ENCODE measurements at regions of chr12 and their contacts with region 1.

Region 1: GRCh38 chr12:113299619-113300237 is 35.2 kb downstream of the SLC8B1 start:
- DNase-seq: peak; percentile 23 to 71
- ATAC-seq: peak; percentile 57
- H3K4me3 ChIP-seq: no peak overlapping the region
- H3K27ac ChIP-seq: peak overlapping the region; percentile 76 to 89 (median 80)
- H3K4me1 ChIP-seq: peaks cover 27 to 30% of the 10 kb centered on the region in 2 donors
- H3K27me3 ChIP-seq: no peaks in the 10 kb centered on the region
- CTCF ChIP-seq: no peak
- POLR2A ChIP-seq: no peak

Region 2: DNA sequence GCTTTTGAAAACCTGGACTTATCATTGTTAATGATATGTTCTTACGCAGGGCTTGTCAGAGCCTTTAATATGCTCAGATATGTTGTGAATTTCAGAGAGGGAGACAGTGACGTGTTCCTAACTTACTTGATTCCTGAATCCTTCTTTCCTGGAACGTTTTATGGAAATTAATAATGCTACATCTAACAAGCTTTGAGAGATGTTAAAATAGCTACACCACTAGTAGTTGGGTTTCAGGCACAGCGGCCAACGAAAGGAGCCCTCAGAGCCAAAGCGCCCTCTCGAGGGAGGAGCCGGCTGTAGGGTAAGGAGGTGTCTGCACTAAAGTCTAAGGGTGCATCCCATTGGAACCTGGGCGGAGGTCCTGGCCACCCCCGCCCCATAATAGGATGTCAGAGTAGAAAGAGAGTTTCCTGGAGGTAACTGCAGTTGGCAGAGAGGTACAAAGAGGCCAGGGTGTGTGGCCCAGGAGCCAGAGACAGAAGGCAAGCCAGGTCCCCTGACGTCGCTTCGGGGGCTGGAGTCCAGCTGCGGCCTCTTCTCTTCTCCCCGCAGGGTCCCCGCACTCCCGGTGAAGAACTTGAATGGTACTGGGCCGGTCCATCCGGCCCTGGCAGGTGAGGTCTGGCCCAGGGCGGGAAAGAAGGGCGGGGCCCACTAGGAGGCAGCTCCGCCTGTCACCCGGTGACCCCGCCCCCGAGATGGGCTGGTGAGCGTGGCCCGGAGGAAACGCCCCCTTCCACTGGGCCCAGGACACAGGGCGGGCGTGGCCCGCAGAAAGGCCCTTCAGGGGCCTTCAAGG is 206.9 kb before region 1 on chr12:
- in situ Hi-C with region 1: no loop called
- intact Hi-C with region 1: no loop called
- DNase-seq: peak in 1 of 2 donors; percentile 25
- ATAC-seq: peak in 1 of 2 donors; percentile 33
- H3K4me3 ChIP-seq: no peak overlapping the region
- H3K27ac ChIP-seq: no peak overlapping the region
- H3K4me1 ChIP-seq: peaks cover 0 to 3% of the 10 kb centered on the region in 2 donors
- H3K27me3 ChIP-seq: peaks cover 13 to 20% (median 14%) of the 10 kb centered on the region in 3 donors
- CTCF ChIP-seq: no peak
- POLR2A ChIP-seq: no peak

Region 3: DNA sequence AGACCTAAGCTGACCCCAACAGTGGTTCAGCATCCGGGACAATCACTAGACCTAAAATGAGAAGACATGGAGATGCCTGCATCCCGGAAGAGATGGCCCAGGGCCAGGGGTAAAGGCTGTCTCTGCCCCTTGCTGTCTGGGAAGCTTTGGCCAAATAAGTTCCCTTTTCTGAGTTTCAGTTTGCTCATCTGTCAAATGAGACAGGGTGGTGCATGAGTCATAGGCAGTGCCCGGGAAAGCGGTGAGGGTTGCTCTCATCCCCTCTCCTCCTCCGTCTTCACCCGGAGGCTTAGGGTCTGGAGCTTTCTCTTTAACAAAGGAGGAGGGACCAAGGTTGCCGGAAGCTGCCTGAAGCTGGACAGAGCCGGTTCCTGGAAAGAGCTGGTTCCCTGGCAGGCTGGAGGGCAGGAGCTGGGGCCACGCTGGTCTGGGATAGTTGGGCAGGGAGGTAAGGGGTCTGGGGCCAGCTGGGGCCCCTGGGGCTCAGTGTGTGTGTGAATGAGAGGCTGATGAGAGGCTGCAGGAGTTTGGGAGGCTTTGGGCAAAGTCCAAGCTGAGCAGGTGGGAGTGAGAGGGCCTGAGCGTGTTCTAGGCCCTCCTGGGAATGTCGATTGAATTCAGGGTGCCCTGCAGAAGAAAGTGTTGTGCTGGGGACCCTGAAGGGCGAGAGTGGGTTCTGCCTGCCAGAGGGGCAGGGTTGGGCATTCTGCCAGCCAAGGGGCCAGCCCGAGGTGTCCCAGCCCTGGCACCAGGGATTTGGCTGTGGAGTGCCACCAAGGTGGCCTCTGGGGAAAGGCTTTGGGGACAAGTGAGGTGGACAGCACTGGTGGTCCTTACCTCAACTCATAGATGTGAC is 122.5 kb after region 1 on chr12 and contains the start of gene SDSL:
- in situ Hi-C with region 1: loop called in 1 of 4 experiments (anchors 25 kb)
- intact Hi-C with region 1: no loop called
- DNase-seq: peak; percentile 26 to 52
- ATAC-seq: peak; percentile 60 to 71
- H3K4me3 ChIP-seq: peak within 1 kb of the TSS; percentile 34 to 56 (median 43)
- H3K27ac ChIP-seq: peak within 1 kb of the TSS in 2 of 4 donors; percentile 24 to 48
- H3K4me1 ChIP-seq: peaks cover 0 to 8% of the 10 kb centered on the region in 2 donors
- H3K27me3 ChIP-seq: no peaks in the 10 kb centered on the region
- CTCF ChIP-seq: no peak
- POLR2A ChIP-seq: peak in 1 of 2 donors; percentile 15
- total RNA-seq, gene SDSL: 0.91 to 1.4 (median 0.98) TPM in 3 of 4 donors, not detected in the other

Measured in gastrocnemius medialis (tissue), 4 donors.